ENCODE measurements at regions of chr7 and their contacts with region 1.

Region 1: GRCh38 chr7:97104719-97105238 is 12.7 kb upstream of the SDHAF3 start:
- DNase-seq: peak; percentile 56 to 95
- H3K4me3 ChIP-seq: no peak overlapping the region
- H3K27ac ChIP-seq: no peak overlapping the region
- H3K4me1 ChIP-seq: no peaks in the 10 kb centered on the region
- H3K27me3 ChIP-seq: no peaks in the 10 kb centered on the region
- CTCF ChIP-seq: peak; percentile 69 to 92 (median 85)
- EP300 ChIP-seq: no peak
- POLR2A ChIP-seq: no peak
- RAD21 ChIP-seq: peak; percentile 99 to 100

Region 2: GRCh38 chr7:96915029-96915428 is 189.8 kb before region 1 on chr7:
- CTCF ChIA-PET with region 1: no interaction called
- POLR2A ChIA-PET with region 1: no interaction called
- DNase-seq: no peak
- H3K4me3 ChIP-seq: no peak overlapping the region
- H3K27ac ChIP-seq: no peak overlapping the region
- H3K4me1 ChIP-seq: no peaks in the 10 kb centered on the region
- H3K27me3 ChIP-seq: no peaks in the 10 kb centered on the region
- CTCF ChIP-seq: no peak
- EP300 ChIP-seq: no peak
- POLR2A ChIP-seq: no peak
- RAD21 ChIP-seq: no peak

Region 3: DNA sequence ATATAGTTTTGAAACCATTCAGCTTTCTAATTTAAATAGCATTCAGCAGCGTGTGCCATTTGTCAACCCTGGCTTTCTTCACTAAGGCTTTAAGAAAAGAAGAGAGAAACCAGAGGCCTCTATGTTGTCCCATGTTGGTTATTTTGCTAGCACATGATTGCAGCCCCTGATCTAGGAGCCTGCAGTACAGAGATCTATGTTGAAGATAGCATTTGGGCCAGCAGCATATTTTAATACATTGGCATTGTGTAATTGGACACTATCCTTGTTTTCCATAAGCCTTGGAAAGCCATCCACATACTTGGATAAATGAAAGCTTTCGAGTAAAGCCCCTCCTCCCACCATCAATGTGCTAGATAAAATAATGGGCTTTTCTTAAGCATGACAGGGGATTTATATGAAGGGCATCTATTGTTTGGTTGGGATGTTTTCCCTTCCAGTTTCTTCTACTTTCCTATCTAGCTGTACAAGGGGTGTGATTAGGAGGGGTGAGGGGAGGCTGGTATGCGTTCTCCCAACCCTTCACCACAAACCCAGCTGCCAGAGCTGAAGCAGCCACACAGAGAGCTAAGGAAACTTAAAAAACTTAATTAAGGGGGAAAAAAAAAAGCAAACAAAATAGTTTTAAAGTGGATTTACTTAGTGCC is 10.4 kb before region 1 on chr7:
- CTCF ChIA-PET with region 1: interaction called, 11 read pairs
- POLR2A ChIA-PET with region 1: no interaction called
- DNase-seq: no peak
- H3K4me3 ChIP-seq: no peak overlapping the region
- H3K27ac ChIP-seq: no peak overlapping the region
- H3K4me1 ChIP-seq: no peaks in the 10 kb centered on the region
- H3K27me3 ChIP-seq: no peaks in the 10 kb centered on the region
- CTCF ChIP-seq: no peak
- EP300 ChIP-seq: no peak
- POLR2A ChIP-seq: no peak
- RAD21 ChIP-seq: no peak

Region 4: GRCh38 chr7:97117372-97118188 is 12.8 kb after region 1 on chr7 and contains the start of gene SDHAF3:
- CTCF ChIA-PET with region 1: interaction called, 24 read pairs
- POLR2A ChIA-PET with region 1: interaction called, 5 read pairs
- DNase-seq: peak; percentile 98 to 99
- H3K4me3 ChIP-seq: peak within 1 kb of the TSS; percentile 87 to 100 (median 98)
- H3K27ac ChIP-seq: peak within 1 kb of the TSS; percentile 92
- H3K4me1 ChIP-seq: peaks cover 0 to 4% (median under 1%) of the 10 kb centered on the region in 4 experiments; a peak in 1 of 7 replicates
- H3K27me3 ChIP-seq: no peaks in the 10 kb centered on the region; a peak in 1 of 7 replicates
- CTCF ChIP-seq: peak in 2 of 3 experiments; percentile 2 to 11; a peak in 2 of 4 replicates
- EP300 ChIP-seq: 0 out of 3 replicates have a peak, but pooled peaks of 1 of the 2 experiments have one; percentile 38
- POLR2A ChIP-seq: peak; percentile 96 to 98
- RAD21 ChIP-seq: no peak
- total RNA-seq, gene SDHAF3: 31.3 and 38.0 TPM in 2 replicates

Region 5: DNA sequence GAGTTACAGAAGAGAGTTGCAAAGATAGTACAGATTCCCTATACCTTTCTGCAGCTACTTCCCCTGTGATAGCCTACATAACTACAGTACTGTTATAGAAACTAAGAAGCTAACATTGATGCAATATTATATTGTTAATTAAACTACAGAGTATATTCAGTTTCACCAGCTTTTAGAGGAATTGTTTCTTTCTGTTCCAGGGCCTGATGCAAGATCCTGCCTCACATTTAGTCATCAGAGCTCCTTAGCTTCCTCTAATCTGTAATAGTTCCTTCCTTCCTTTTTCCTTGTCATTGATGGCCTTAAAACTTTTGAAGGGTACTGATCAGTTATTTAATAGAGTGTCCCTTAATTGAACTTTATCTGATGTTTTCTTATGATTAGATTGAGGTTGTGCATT is 69.5 kb after region 1 on chr7:
- CTCF ChIA-PET with region 1: interaction called, 11 read pairs
- POLR2A ChIA-PET with region 1: no interaction called
- DNase-seq: no peak
- H3K4me3 ChIP-seq: no peak overlapping the region
- H3K27ac ChIP-seq: no peak overlapping the region
- H3K4me1 ChIP-seq: no peaks in the 10 kb centered on the region
- H3K27me3 ChIP-seq: no peaks in the 10 kb centered on the region
- CTCF ChIP-seq: no peak
- EP300 ChIP-seq: no peak
- POLR2A ChIP-seq: no peak
- RAD21 ChIP-seq: no peak

Region 6: GRCh38 chr7:97179454-97180104 is 74.8 kb after region 1 on chr7:
- CTCF ChIA-PET with region 1: interaction called, 12 read pairs
- POLR2A ChIA-PET with region 1: no interaction called
- DNase-seq: peak in 1 of 2 experiments; percentile 17
- H3K4me3 ChIP-seq: no peak overlapping the region
- H3K27ac ChIP-seq: no peak overlapping the region
- H3K4me1 ChIP-seq: no peaks in the 10 kb centered on the region
- H3K27me3 ChIP-seq: no peaks in the 10 kb centered on the region
- CTCF ChIP-seq: peak; percentile 53 to 71 (median 67)
- EP300 ChIP-seq: no peak
- POLR2A ChIP-seq: no peak
- RAD21 ChIP-seq: peak; percentile 83 to 88

Region 7: DNA sequence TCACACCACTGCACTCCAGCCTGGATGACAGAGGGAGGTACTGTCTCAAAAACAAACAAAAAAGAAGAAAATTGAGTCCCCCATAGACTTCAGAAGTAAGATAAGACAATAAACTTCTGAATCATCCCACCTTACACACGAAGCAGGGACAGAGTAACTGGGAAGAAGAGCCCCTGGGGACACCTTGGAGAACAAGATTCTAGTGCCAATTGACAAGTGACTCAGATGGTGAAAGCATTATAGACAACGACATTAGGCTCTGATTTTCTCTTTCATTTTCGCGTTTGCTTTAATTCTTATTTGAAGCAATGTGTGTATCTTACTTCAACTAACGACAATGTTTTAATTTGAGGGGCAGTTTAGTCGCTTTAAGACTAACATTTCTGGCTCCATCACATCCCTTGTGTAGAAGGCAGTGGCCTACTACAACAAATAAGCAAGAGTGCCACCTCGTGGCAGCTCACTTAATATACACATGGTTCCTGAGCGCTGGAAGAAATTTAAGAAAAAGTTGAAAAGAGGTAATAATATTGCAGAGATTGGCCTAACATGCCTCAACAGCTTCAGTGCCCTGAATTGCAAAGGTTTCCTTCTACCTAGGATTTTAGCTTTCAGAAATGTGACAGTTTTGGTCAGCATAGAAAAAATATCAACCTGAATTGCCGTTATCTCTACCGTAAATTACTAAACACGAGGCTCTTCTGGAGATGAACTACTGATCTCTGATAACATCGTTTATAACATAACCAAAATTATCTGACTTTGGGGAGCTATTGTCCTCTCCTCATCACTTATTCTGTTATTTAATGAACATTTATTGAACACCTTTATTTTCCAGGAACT is 730.7 kb after region 1 on chr7:
- CTCF ChIA-PET with region 1: interaction called, 17 read pairs
- POLR2A ChIA-PET with region 1: no interaction called
- DNase-seq: peak in 1 of 2 experiments; percentile 83
- H3K4me3 ChIP-seq: no peak overlapping the region
- H3K27ac ChIP-seq: no peak overlapping the region
- H3K4me1 ChIP-seq: no peaks in the 10 kb centered on the region
- H3K27me3 ChIP-seq: no peaks in the 10 kb centered on the region
- CTCF ChIP-seq: peak in 2 of 3 experiments; percentile 58 to 59; a peak in 3 of 4 replicates
- EP300 ChIP-seq: no peak
- POLR2A ChIP-seq: no peak
- RAD21 ChIP-seq: peak; percentile 82 to 84

Region 8: DNA sequence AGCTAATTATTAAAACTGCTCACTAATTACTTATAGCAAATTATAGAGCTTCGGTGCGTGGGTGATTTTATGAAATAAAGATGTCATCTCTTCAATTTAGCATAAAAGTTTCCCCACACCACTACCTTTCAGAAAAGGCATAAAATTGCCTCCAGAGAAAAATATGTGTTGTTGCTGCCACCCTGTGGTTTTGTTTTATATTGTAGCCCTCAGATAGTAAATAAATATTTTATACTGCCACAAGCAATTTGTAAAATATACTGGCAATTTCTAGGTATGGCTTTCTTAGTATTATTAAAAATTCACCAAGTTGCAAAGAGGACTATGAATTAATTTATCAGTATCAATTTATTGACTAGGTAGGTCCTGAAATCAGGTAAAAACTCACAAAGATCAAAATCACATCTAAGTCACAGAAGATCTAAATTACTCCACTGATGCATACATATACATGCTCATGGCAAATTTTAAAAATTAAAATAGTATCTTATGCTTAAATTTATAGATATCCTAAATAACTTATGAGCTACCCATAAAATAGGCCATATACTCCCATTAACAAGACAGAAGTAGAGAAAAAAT is 740.9 kb after region 1 on chr7:
- CTCF ChIA-PET with region 1: interaction called, 11 read pairs
- POLR2A ChIA-PET with region 1: no interaction called
- DNase-seq: no peak
- H3K4me3 ChIP-seq: no peak overlapping the region
- H3K27ac ChIP-seq: no peak overlapping the region
- H3K4me1 ChIP-seq: no peaks in the 10 kb centered on the region
- H3K27me3 ChIP-seq: no peaks in the 10 kb centered on the region
- CTCF ChIP-seq: peak in 2 of 3 experiments; percentile 4 to 18; a peak in 2 of 4 replicates
- EP300 ChIP-seq: no peak
- POLR2A ChIP-seq: no peak
- RAD21 ChIP-seq: peak; percentile 59 to 64